Panc1 (cell line): ENCODE measurements at regions of chr9 and their contacts with region 1.

Region 1: DNA sequence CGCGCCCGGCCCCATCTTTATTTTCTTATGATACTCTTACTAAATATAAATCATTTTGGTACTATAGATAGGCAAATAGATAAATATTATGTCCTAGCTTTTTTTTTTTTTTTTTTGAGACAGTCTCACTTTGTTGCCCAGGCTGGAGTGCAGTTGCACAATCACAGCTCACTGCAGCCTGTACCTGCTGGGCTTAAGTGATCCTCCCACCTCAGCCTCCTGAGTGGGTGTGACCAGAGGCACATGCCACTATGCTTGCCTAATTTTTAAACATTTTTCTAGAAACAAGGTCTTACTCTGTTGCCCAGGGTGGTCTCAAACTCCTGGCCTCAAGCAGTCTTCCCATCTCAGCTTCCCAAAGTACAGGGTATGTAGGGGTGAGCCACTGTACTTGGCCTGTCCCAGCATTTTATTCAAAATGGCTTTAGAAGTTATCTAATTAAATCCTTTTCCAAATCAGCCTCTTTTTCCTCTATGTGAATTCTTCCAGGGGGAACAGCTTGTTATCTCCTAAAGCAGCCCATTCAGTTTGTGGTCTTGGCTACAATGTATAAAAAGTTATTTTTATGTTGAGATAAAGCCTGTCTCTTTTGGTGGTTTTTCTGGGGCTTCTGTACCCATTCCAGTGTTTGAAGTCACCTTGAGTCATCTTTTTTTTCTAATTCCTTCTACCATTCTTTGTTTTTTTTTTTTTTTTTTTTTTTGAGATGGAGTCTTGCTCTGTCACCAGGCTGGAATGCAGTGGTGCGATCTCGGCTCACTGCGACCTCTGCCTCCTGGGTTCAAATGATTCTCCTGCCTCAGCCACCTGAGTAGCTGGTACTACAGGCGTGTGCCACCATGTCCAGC is 12.2 kb downstream of the MELK start:
- DNase-seq: no peak
- ATAC-seq: peak; percentile 45
- H3K4me3 ChIP-seq: no peak overlapping the region
- H3K27ac ChIP-seq: no peak overlapping the region
- H3K4me1 ChIP-seq: no peaks in the 10 kb centered on the region
- H3K27me3 ChIP-seq: no peaks in the 10 kb centered on the region
- CTCF ChIP-seq: no peak

Region 2: DNA sequence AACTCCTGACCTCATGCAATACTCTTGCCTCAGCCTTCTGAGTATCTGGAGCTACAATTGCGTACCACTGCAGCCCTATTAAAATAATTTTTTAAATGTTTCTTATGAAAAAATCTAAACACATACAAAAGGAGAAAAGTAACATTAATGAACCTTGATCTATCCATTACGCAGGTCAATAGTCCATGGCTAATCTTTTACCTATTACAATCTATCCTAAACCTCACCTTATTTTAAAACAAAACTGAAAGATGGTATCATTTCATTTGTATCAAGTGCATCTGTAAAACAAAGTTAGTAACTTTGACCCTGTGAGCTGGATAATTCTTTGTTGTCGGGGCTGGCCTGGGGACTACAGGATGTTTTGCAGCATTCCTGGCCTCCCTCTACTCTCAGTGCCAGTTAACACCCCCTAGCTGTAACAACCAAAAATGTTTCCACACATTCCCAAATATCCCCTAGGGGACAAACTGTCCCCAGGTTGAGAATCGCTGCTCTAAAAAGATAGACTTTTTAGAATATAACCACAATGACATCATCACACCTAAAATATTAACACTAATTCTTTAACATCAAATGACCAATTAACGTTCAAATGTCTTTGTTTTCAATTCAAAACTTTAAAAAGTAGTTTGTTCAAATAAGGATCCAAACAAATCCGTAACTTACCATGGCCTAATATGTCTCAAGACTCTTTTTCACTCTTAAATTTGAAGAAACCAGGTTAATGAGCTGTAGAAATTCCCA is 239.6 kb before region 1 on chr9:
- CTCF ChIA-PET with region 1: interaction called, 13 read pairs
- POLR2A ChIA-PET with region 1: no interaction called
- in situ Hi-C with region 1: no loop called
- intact Hi-C with region 1: no loop called
- DNase-seq: no peak
- ATAC-seq: peak; percentile 58; the same call in 1 of the 2 replicates
- H3K4me3 ChIP-seq: no peak overlapping the region
- H3K27ac ChIP-seq: no peak overlapping the region
- H3K4me1 ChIP-seq: no peaks in the 10 kb centered on the region
- H3K27me3 ChIP-seq: no peaks in the 10 kb centered on the region
- CTCF ChIP-seq: peak; percentile 42

Region 3: DNA sequence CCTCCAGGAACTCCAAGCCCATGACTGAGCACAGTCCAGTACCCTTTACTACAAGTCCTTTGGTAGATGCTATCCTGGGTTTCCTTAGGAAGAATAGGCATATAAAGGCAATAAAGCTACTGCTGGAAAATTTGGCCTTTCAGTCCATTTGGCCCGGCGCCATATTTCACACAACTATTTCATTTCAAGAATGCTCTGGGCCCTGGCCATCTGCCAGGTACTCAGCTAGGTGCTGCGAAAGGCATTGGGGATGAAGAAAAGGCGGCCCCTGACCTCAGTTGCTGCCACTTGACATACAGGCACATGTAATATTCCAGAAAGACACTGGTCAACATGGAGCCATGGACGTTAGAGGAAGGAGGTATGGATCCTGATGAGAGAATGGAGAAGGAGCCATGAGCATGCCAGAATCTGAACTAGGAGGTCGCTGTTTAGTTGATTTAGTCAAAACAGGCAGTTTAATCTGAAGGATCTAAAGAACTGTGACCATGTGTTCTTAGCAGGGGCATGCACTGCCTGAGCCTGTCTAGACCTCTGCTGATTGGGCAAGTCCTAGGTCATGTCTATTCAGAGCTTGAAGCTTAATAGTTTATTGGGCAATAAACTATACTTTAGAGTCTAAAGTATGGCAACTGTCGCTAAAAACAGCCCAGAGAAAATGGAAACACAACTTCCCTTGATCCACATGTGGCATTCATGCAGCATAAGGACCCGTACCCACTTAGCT is 137.2 kb after region 1 on chr9:
- CTCF ChIA-PET with region 1: interaction called, 10 read pairs
- POLR2A ChIA-PET with region 1: no interaction called
- in situ Hi-C with region 1: no loop called
- intact Hi-C with region 1: no loop called
- DNase-seq: no peak
- ATAC-seq: no peak
- H3K4me3 ChIP-seq: no peak overlapping the region
- H3K27ac ChIP-seq: no peak overlapping the region
- H3K4me1 ChIP-seq: no peaks in the 10 kb centered on the region
- H3K27me3 ChIP-seq: peaks cover 11% of the 10 kb centered on the region; the same call in 1 of the 2 replicates
- CTCF ChIP-seq: no peak

Region 4: DNA sequence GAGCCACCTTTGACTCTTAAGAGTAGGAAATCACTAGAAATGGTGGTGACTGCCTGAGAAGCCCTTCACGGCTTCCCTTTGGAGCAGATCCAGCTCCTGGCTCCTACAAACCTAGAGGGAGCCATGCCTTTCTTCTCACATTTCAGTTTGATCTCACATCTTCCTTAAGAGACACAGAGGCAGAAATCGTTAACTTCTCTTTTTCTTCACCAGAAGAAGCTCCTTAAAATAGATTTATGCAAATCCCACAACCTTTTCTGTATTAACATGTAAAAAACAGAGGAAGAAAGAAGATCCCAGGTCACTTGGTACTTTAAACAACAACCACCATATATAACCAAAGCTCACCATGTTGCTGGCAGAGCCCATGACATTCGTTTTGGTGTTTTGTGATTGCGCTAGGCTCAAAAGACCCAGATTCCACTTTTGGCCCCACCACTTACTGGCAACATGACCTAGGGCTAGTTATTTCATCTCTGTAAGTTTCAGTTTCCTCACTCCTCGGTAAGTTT is 419.6 kb after region 1 on chr9:
- CTCF ChIA-PET with region 1: no interaction called
- POLR2A ChIA-PET with region 1: no interaction called
- in situ Hi-C with region 1: no loop called
- intact Hi-C with region 1: no loop called
- DNase-seq: no peak
- ATAC-seq: no peak
- H3K4me3 ChIP-seq: no peak overlapping the region
- H3K27ac ChIP-seq: no peak overlapping the region
- H3K4me1 ChIP-seq: no peaks in the 10 kb centered on the region
- H3K27me3 ChIP-seq: peaks cover 42% of the 10 kb centered on the region
- CTCF ChIP-seq: no peak